ENCODE measurements at regions of chr1 and their contacts with region 1.

Region 1: GRCh38 chr1:24642481-24643361 is at the start of gene SRRM1:
- DNase-seq: peak; percentile 96 to 100 (median 99)
- ATAC-seq: peak; percentile 93
- H3K4me3 ChIP-seq: peak within 1 kb of the TSS; percentile 83
- H3K4me3 Mint-ChIP-seq: peak within 1 kb of the TSS; percentile 88 to 100 (median 95)
- H3K27ac ChIP-seq: peak within 1 kb of the TSS; percentile 100
- H3K27ac Mint-ChIP-seq: peak within 1 kb of the TSS; percentile 95 to 100 (median 99)
- H3K4me1 ChIP-seq: peaks cover 26 to 32% of the 10 kb centered on the region in 2 donors
- H3K4me1 Mint-ChIP-seq: peaks cover 26 to 58% (median 51%) of the 10 kb centered on the region in 7 donors
- H3K27me3 ChIP-seq: no peaks in the 10 kb centered on the region
- H3K27me3 Mint-ChIP-seq: peaks cover 0 to under 1% (median 0%) of the 10 kb centered on the region in 5 donors
- total RNA-seq, gene SRRM1: 188 to 342 (median 246) TPM

Region 2: GRCh38 chr1:22794647-22795365 is 1847.9 kb before region 1 on chr1:
- CTCF ChIA-PET with region 1: no interaction called
- POLR2A ChIA-PET with region 1: no interaction called
- intact Hi-C with region 1: no loop called
- DNase-seq: no peak
- ATAC-seq: no peak
- H3K4me3 ChIP-seq: no peak overlapping the region
- H3K4me3 Mint-ChIP-seq: no peak overlapping the region
- H3K27ac ChIP-seq: no peak overlapping the region
- H3K27ac Mint-ChIP-seq: no peak overlapping the region
- H3K4me1 ChIP-seq: no peaks in the 10 kb centered on the region
- H3K4me1 Mint-ChIP-seq: no peaks in the 10 kb centered on the region
- H3K27me3 ChIP-seq: no peaks in the 10 kb centered on the region
- H3K27me3 Mint-ChIP-seq: peaks cover 0 to 6% (median 6%) of the 10 kb centered on the region in 5 donors

Region 3: GRCh38 chr1:23691499-23692307 is 951.0 kb before region 1 on chr1 and contains the start of gene RPL11:
- CTCF ChIA-PET with region 1: no interaction called
- POLR2A ChIA-PET with region 1: no interaction called
- intact Hi-C with region 1: loop called in 1 of 2 experiments (anchors 10 kb)
- DNase-seq: peak; percentile 60 to 92 (median 88)
- ATAC-seq: peak; percentile 100
- H3K4me3 ChIP-seq: peak within 1 kb of the TSS; percentile 82
- H3K4me3 Mint-ChIP-seq: peak within 1 kb of the TSS; percentile 87 to 96 (median 94)
- H3K27ac ChIP-seq: peak within 1 kb of the TSS; percentile 88
- H3K27ac Mint-ChIP-seq: peak within 1 kb of the TSS; percentile 87 to 97 (median 93)
- H3K4me1 ChIP-seq: peaks cover 19 to 20% of the 10 kb centered on the region in 2 donors
- H3K4me1 Mint-ChIP-seq: peaks cover 33 to 50% (median 45%) of the 10 kb centered on the region in 7 donors
- H3K27me3 ChIP-seq: no peaks in the 10 kb centered on the region
- H3K27me3 Mint-ChIP-seq: no peaks in the 10 kb centered on the region
- total RNA-seq, gene RPL11: 1,206 to 2,420 (median 2,172) TPM

Region 4: DNA sequence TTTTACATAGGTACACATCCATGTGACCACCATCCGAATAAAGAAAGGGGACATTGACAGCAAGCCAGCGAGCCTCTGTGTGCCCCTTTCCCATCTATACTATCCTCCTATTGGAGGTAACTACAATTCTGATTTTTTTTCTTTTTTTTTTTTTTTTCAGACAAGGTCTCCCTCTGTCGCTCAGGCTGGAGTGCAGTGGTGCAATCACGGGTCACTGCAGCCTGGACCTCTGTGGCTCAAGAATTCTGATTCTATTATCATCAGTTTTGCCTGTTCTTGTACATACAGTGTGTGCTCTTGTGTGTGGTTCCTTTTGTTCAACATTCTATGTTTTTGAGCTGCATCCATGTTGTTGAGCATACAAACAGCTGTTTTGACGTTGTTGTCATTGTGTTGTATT is 606.6 kb before region 1 on chr1:
- CTCF ChIA-PET with region 1: no interaction called
- POLR2A ChIA-PET with region 1: no interaction called
- intact Hi-C with region 1: no loop called
- DNase-seq: no peak
- ATAC-seq: no peak
- H3K4me3 ChIP-seq: no peak overlapping the region
- H3K4me3 Mint-ChIP-seq: no peak overlapping the region
- H3K27ac ChIP-seq: no peak overlapping the region
- H3K27ac Mint-ChIP-seq: no peak overlapping the region
- H3K4me1 ChIP-seq: no peaks in the 10 kb centered on the region
- H3K4me1 Mint-ChIP-seq: peaks cover 0 to 2% (median 0%) of the 10 kb centered on the region in 7 donors
- H3K27me3 ChIP-seq: peaks cover 0 to 3% of the 10 kb centered on the region in 2 donors
- H3K27me3 Mint-ChIP-seq: peaks cover 0 to 11% (median 0%) of the 10 kb centered on the region in 5 donors

Region 5: DNA sequence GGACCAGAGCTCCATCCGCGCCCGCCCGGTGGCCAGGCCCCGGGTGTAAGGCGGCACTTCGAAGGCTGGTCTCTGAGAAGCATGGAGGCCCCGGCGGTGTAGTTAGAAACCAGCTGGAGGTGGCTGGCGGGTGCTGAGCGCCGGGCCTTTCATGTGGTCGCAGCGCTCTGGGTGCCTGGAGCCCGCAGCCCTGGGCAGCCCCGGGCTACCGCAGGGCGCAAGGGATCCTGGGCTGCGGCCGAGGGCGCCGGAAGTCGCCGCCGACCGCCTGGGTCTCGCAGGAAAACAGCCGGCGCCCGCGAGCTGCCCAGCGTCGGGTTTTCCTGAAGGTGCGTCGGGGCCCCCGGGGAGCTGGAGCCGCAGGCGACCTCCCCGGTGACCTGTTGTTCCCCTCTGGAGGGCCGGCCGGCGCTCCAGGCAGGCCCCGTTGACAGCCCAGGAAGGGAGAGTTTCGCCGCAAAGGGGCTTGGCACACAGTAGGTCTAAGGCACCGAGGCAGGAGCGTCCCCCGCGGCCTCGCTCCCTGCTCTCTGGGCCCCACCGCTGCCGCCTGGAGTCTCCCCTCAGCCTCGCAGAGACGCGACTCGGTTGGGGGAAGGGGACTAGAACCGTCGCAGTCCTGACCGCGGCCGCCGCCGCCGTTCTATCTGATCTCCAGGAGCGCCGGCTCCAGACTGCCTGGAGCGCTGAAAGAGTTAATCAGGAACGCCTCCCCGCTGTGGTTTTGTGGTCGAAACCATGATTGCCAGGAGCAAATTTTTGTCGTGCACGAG is 320.8 kb before region 1 on chr1:
- CTCF ChIA-PET with region 1: no interaction called
- POLR2A ChIA-PET with region 1: no interaction called
- intact Hi-C with region 1: loop called in 1 of 2 experiments (anchors 5 kb)
- DNase-seq: peak; percentile 34 to 77 (median 65)
- ATAC-seq: peak; percentile 80
- H3K4me3 ChIP-seq: peak overlapping the region; percentile 42
- H3K4me3 Mint-ChIP-seq: peak overlapping the region; percentile 86 to 95 (median 90)
- H3K27ac ChIP-seq: no peak overlapping the region
- H3K27ac Mint-ChIP-seq: peak overlapping the region in 6 of 9 donors; percentile 9 to 81 (median 71)
- H3K4me1 ChIP-seq: peaks cover 22 to 43% of the 10 kb centered on the region in 2 donors
- H3K4me1 Mint-ChIP-seq: peaks cover 36 to 54% (median 47%) of the 10 kb centered on the region in 7 donors
- H3K27me3 ChIP-seq: peaks cover 0 to 11% of the 10 kb centered on the region in 2 donors
- H3K27me3 Mint-ChIP-seq: peaks cover 0 to 96% (median 44%) of the 10 kb centered on the region in 5 donors

Region 6: GRCh38 chr1:24438423-24438901 is 204.3 kb before region 1 on chr1:
- CTCF ChIA-PET with region 1: no interaction called
- POLR2A ChIA-PET with region 1: no interaction called
- intact Hi-C with region 1: no loop called
- DNase-seq: no peak
- ATAC-seq: no peak
- H3K4me3 ChIP-seq: no peak overlapping the region
- H3K4me3 Mint-ChIP-seq: no peak overlapping the region
- H3K27ac ChIP-seq: no peak overlapping the region
- H3K27ac Mint-ChIP-seq: peak overlapping the region in 6 of 9 donors; percentile 15 to 60 (median 43)
- H3K4me1 ChIP-seq: peaks cover 0 to 7% of the 10 kb centered on the region in 2 donors
- H3K4me1 Mint-ChIP-seq: peaks cover 12 to 64% (median 46%) of the 10 kb centered on the region in 7 donors
- H3K27me3 ChIP-seq: no peaks in the 10 kb centered on the region
- H3K27me3 Mint-ChIP-seq: no peaks in the 10 kb centered on the region

Region 7: DNA sequence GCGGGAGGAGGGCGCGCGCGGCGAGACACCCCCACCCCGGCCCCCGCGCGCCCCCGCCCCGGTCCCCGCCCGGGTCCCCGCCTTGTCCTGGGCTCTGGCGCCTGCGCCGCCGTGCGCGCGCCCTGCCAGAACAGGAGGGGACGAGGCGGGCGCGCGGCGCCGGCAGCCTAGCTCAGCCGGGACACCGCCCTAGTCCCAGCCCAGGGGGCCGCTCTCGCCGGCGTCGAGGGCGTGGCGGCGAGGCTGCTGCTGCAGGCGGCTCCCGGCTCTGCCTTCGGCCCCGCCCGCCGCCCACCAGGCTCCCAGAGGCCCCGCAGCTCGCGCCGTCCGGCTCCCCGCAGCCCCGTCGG is 140.0 kb before region 1 on chr1 and contains the start of gene RCAN3:
- CTCF ChIA-PET with region 1: no interaction called
- POLR2A ChIA-PET with region 1: interaction called, 7 read pairs
- intact Hi-C with region 1: loop called (anchors 1 kb)
- DNase-seq: peak; percentile 82 to 94 (median 92)
- ATAC-seq: peak; percentile 81
- H3K4me3 ChIP-seq: peak within 1 kb of the TSS; percentile 84
- H3K4me3 Mint-ChIP-seq: peak within 1 kb of the TSS; percentile 90 to 100 (median 99)
- H3K27ac ChIP-seq: peak within 1 kb of the TSS; percentile 99
- H3K27ac Mint-ChIP-seq: peak within 1 kb of the TSS; percentile 95 to 99 (median 98)
- H3K4me1 ChIP-seq: peaks cover 42 to 53% of the 10 kb centered on the region in 2 donors
- H3K4me1 Mint-ChIP-seq: peaks cover 38 to 65% (median 60%) of the 10 kb centered on the region in 7 donors
- H3K27me3 ChIP-seq: no peaks in the 10 kb centered on the region
- H3K27me3 Mint-ChIP-seq: peaks cover 0 to 9% (median 0%) of the 10 kb centered on the region in 5 donors
- total RNA-seq, gene RCAN3: 68.5 to 247 (median 183) TPM

Region 8: DNA sequence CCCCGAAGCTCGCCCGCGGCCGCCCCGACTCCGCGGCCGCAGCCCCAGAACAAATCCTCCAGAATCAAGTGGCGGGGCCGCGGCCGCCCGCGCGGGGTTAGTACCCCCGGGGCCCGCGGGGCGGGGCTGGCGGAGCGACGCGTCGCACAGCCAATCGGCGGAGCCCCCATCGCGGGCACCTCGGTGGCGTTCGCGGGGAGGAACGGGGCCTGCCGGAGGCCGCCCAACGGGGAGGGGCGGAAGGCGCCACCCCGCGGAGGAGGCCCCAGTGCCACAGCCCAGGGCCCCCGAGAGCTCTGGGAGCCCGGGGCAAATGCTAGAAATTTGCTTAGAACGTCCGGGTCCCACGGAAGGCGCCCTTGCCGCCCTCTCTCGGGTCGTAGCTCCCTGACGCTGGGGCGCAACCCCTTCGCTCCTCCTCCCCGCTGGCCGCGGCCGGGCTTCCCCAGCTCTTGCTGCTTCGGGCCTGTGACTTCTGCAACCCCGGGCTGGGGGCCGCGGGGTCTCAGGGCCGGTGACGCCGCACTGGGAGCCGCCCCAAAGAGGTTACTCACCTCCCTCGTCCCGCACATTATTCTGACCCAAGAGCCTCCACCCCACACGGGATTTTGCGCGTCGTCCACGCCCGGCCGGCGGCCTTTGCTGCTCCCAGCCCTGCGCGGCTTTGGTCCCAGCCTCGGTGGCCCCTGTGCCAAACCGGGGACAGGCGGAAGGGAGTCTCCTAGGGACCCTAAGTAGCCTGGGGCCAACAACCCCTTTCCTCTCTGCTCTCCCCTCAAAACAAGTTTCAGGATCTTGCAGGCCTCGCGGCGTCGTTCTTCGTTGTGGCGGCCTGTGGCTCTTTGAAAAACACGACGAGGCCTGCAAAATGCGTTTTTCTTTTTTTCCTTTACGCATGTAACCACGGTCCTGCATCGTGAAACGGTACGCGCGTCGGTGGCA is 287.8 kb after region 1 on chr1 and contains the start of gene RUNX3:
- CTCF ChIA-PET with region 1: no interaction called
- POLR2A ChIA-PET with region 1: no interaction called
- intact Hi-C with region 1: loop called (anchors 1 to 5 kb)
- DNase-seq: peak; percentile 87 to 94 (median 92)
- ATAC-seq: peak; percentile 90
- H3K4me3 ChIP-seq: peak within 1 kb of the TSS; percentile 91
- H3K4me3 Mint-ChIP-seq: peak within 1 kb of the TSS; percentile 85 to 98 (median 96)
- H3K27ac ChIP-seq: peak within 1 kb of the TSS; percentile 96
- H3K27ac Mint-ChIP-seq: peak within 1 kb of the TSS; percentile 71 to 98 (median 97)
- H3K4me1 ChIP-seq: peaks cover 37 to 44% of the 10 kb centered on the region in 2 donors
- H3K4me1 Mint-ChIP-seq: peaks cover 21 to 65% (median 51%) of the 10 kb centered on the region in 7 donors
- H3K27me3 ChIP-seq: no peaks in the 10 kb centered on the region
- H3K27me3 Mint-ChIP-seq: no peaks in the 10 kb centered on the region
- total RNA-seq, gene RUNX3: 71.4 to 135 (median 96.9) TPM

Region 9: DNA sequence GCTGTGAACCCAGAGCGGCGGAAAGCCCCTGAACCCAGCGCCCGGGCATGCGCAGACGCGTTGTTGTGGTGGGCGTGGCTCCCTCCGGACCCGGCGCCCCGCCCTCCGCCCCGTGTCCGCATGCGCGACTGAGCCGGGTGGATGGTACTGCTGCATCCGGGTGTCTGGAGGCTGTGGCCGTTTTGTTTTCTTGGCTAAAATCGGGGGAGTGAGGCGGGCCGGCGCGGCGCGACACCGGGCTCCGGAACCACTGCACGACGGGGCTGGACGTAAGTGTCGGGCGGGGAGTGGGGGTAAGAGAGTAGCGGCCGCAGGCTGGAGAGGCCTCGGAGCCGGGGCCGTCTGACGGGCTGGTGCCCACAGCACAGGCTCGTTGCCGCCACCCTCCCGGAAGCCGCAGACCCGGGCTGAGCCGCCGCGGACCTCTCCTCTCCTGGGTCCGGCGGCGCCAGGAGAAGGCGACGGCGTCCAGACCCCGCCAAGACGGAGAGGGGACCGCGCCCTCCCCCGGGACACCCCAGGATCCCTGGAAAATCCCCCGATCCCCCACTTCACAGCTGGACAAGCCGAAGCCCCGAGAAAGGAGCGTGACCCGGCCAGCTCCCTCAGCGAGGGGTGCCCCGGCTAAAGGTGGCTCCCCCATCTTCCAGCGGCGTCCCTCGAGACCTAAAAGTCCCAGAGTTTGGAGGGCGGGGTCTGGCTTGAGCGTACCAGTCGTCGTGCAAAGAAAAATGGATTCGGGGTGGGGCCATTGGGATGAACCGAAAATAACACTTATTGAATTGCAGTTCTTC is 695.7 kb after region 1 on chr1 and contains the start of gene TMEM50A:
- CTCF ChIA-PET with region 1: no interaction called
- POLR2A ChIA-PET with region 1: no interaction called
- intact Hi-C with region 1: loop called in 1 of 2 experiments (anchors 5 kb)
- DNase-seq: peak; percentile 87 to 99 (median 92)
- ATAC-seq: peak; percentile 90
- H3K4me3 ChIP-seq: peak within 1 kb of the TSS; percentile 94
- H3K4me3 Mint-ChIP-seq: peak within 1 kb of the TSS; percentile 93 to 97 (median 94)
- H3K27ac ChIP-seq: peak within 1 kb of the TSS; percentile 97
- H3K27ac Mint-ChIP-seq: peak within 1 kb of the TSS; percentile 80 to 96 (median 94)
- H3K4me1 ChIP-seq: peaks cover 20 to 22% of the 10 kb centered on the region in 2 donors
- H3K4me1 Mint-ChIP-seq: peaks cover 26 to 58% (median 45%) of the 10 kb centered on the region in 7 donors
- H3K27me3 ChIP-seq: no peaks in the 10 kb centered on the region
- H3K27me3 Mint-ChIP-seq: no peaks in the 10 kb centered on the region
- total RNA-seq, gene TMEM50A: 61.6 to 149 (median 79.0) TPM

Measured in naive thymus-derived CD4-positive, alpha-beta T cell (primary cell).